ENCODE measurements at regions of chr3 and their contacts with region 1.

Region 1: GRCh38 chr3:120072867-120073525 is 21.3 kb downstream of the GSK3B start:
- DNase-seq: no peak
- ATAC-seq: no peak
- H3K4me3 Mint-ChIP-seq: no peak overlapping the region
- H3K27ac Mint-ChIP-seq: no peak overlapping the region
- H3K4me1 Mint-ChIP-seq: peaks cover 63% of the 10 kb centered on the region
- H3K27me3 Mint-ChIP-seq: no peaks in the 10 kb centered on the region
- CTCF ChIP-seq: no peak

Region 2: DNA sequence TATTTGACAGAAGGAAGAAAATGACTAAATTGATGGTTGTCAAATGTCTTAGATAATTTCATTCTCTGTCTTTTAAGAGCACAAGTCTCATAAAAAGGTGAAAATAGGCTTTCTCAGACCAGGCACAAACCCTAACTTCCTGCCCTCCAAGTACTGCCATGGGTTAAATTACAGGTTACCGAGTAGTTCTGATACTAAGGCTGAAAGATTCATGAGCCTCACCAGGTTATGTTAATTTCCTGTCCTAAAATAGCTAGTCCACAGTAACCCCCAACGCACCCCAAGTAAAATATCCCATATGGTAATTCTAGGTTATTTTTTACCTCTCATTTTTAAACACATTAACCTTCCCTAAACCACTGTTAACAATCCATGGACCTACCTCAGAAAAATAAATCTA is 20.8 kb before region 1 on chr3:
- CTCF ChIA-PET with region 1: no interaction called
- POLR2A ChIA-PET with region 1: no interaction called
- intact Hi-C with region 1: loop called (anchors 1 kb)
- DNase-seq: no peak
- ATAC-seq: no peak
- H3K4me3 Mint-ChIP-seq: peak overlapping the region; percentile 3
- H3K27ac Mint-ChIP-seq: peak overlapping the region; percentile 25
- H3K4me1 Mint-ChIP-seq: peaks cover 65% of the 10 kb centered on the region
- H3K27me3 Mint-ChIP-seq: no peaks in the 10 kb centered on the region
- CTCF ChIP-seq: no peak